GM12878 (cell line): ENCODE measurements at regions of chr17 and their contacts with region 1.

Region 1: DNA sequence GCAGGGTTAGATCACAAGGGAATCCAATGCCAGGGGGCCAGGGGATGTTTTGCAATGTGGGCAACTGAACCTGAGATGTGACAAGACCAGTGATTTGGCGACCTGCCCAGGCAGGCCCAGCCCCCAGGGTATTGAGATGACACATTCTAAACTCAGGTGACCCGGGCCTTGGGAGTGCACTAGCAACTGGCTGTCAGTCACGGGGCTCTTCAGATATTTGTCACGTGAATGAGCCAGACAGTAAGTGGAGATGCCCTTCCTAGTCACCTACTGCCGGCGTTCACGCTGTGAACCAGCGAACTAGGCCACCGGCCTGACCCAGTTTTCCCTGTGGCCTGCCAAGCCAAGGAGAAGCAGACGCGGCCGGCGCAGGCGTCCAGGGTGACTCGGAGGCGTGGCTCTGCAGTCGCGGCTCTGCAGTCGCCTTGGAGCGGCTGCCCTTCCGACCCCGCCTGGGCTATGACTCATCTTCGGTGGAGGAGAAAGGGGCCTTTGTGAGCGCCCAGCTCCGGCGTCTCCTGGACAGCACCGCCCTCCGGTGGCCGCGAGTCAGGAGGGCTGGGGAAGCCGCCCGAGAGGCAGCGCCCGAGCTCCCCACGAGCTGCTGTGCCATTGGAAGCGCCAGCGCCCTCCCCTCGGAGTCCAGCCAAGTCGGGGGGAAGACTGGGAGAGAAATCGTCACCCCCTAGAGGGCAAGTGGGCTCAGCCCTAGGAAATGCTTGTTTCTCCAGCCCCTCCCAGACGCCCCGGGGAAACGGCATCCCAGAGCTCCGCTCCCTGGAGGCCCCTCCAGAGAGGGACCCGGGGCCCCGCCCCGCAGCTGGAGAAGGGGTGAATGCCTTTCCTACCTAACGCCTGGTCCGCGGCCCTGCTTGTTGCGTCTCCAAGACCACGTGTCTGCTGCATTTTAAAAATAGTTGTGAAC is 38.8 kb downstream of the WSB1 start:
- DNase-seq: peak; percentile 81
- ATAC-seq: peak; percentile 94
- H3K4me3 ChIP-seq: peak overlapping the region; percentile 67
- H3K27ac ChIP-seq: peak overlapping the region; percentile 72
- H3K4me1 ChIP-seq: peaks cover 20% of the 10 kb centered on the region
- H3K27me3 ChIP-seq: no peaks in the 10 kb centered on the region
- CTCF ChIP-seq: peak; percentile 64 to 96 (median 83); a peak in 5 of 6 replicates
- EP300 ChIP-seq: peak; percentile 48 to 59; a peak in 3 of 4 replicates
- POLR2A ChIP-seq: no peak
- RAD21 ChIP-seq: peak; percentile 87

Region 2: DNA sequence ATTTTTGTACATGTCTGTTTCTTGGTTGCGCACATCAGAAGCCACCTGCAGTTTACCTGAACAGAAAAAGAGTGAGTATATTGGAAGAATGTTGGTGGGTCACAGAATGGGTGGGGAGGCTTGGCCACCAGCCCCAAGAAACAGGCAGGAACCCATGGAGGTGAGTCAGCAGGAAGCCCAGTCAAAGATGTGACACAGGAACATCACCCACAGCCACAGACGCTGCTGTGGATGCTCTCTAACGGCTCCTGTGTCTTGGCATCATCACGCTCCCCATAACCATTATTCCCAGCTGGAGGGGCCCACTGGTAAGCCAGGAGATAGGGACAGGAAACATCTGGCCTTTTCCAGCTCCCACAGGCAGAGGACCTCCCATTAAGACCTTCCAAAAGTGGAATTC is 132.8 kb before region 1 on chr17:
- CTCF ChIA-PET with region 1: interaction called, 15 read pairs
- POLR2A ChIA-PET with region 1: interaction called, 4 read pairs
- RAD21 ChIA-PET with region 1: interaction called, 12 read pairs
- SMC1A ChIA-PET with region 1: interaction called, 12 read pairs
- in situ Hi-C with region 1: no loop called
- intact Hi-C with region 1: no loop called
- DNase-seq: no peak
- ATAC-seq: no peak
- H3K4me3 ChIP-seq: no peak overlapping the region
- H3K27ac ChIP-seq: no peak overlapping the region
- H3K4me1 ChIP-seq: no peaks in the 10 kb centered on the region
- H3K27me3 ChIP-seq: no peaks in the 10 kb centered on the region
- CTCF ChIP-seq: no peak
- EP300 ChIP-seq: no peak
- POLR2A ChIP-seq: no peak
- RAD21 ChIP-seq: no peak

Region 3: DNA sequence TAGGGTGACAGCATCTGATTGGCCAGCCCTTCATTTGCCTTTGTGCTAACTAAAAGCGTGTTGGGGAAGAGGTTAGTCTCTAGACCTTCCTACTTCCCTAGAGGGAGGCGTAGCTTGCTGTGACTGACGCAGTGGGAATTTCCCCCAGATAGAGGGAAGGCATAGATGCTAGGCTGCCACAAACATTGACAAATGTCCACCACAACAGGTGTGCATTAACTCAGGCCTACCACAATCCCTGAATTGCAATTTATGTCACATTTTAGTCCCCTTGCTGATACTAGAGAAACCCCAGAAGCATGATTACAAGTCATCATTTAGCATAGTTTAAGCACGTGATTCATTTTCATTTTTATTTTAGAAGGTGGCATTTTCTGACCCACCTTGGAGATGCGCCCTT is 115.1 kb before region 1 on chr17:
- CTCF ChIA-PET with region 1: interaction called, 5 read pairs
- POLR2A ChIA-PET with region 1: no interaction called
- RAD21 ChIA-PET with region 1: interaction called, 13 read pairs
- SMC1A ChIA-PET with region 1: interaction called, 15 read pairs
- in situ Hi-C with region 1: no loop called
- intact Hi-C with region 1: loop called (anchors 2 kb)
- DNase-seq: peak; percentile 89
- ATAC-seq: peak; percentile 88
- H3K4me3 ChIP-seq: no peak overlapping the region
- H3K27ac ChIP-seq: peak overlapping the region; percentile 72
- H3K4me1 ChIP-seq: peaks cover 38% of the 10 kb centered on the region
- H3K27me3 ChIP-seq: no peaks in the 10 kb centered on the region
- CTCF ChIP-seq: no peak
- EP300 ChIP-seq: peak; percentile 78 to 79; a peak in 3 of 4 replicates
- POLR2A ChIP-seq: no peak
- RAD21 ChIP-seq: no peak

Region 4: GRCh38 chr17:27293898-27294688 is 38.7 kb before region 1 on chr17 and contains the start of gene WSB1:
- CTCF ChIA-PET with region 1: interaction called, 5 read pairs
- POLR2A ChIA-PET with region 1: interaction called, 8 read pairs
- RAD21 ChIA-PET with region 1: interaction called, 26 read pairs
- SMC1A ChIA-PET with region 1: interaction called, 7 read pairs
- in situ Hi-C with region 1: loop called (anchors 5 kb)
- intact Hi-C with region 1: loop called (anchors 2 kb)
- DNase-seq: peak; percentile 61
- ATAC-seq: peak; percentile 83
- H3K4me3 ChIP-seq: peak within 1 kb of the TSS; percentile 86
- H3K27ac ChIP-seq: peak within 1 kb of the TSS; percentile 97
- H3K4me1 ChIP-seq: peaks cover 11% of the 10 kb centered on the region
- H3K27me3 ChIP-seq: no peaks in the 10 kb centered on the region
- CTCF ChIP-seq: no peak
- EP300 ChIP-seq: peak; percentile 20 to 57; a peak in 2 of 4 replicates
- POLR2A ChIP-seq: peak; percentile 100
- RAD21 ChIP-seq: no peak
- polyA plus RNA-seq, gene WSB1: 26.6 to 49.8 TPM

Region 5: DNA sequence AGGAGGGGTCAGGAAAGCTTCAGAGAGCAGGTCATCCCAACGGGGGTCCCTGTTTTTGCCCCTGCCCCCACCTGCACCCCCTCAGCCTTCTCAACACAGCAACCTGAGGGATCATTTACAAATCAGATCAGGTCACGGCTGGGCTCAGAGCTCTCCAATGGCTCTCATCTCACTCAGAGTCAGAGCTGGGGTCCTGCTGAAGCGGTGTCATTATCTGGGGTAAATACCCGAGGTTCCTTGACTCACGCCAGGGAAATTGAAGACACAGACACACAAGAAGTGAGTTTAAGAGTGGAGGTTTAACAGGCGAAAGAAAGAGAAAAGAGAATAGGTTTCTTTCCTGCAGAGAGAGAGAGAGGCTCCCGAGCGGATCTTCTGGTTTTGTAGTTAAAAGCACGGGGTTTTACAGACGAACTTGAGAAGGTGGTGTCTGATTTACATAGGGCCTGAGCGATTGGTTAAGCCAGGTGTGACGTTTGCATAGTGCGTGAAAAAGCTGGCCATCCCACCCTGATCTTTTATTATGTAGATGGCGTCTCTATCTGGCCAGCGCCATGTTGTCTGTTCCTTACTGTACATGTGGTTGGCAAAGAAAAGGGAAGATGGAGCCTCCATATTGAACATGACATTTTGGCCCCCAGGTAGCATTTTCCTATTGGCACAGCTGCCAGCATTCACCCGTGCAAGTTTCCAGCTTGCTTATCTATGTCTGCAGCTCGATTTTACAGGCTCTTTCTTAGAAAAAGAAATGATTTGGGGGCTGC is 12.6 kb after region 1 on chr17:
- CTCF ChIA-PET with region 1: interaction called, 13 read pairs
- POLR2A ChIA-PET with region 1: no interaction called
- RAD21 ChIA-PET with region 1: interaction called, 9 read pairs
- SMC1A ChIA-PET with region 1: interaction called, 3 read pairs
- in situ Hi-C with region 1: no loop called
- intact Hi-C with region 1: loop called (anchors 2 kb)
- DNase-seq: no peak
- ATAC-seq: no peak
- H3K4me3 ChIP-seq: no peak overlapping the region
- H3K27ac ChIP-seq: no peak overlapping the region
- H3K4me1 ChIP-seq: peaks cover 17% of the 10 kb centered on the region
- H3K27me3 ChIP-seq: no peaks in the 10 kb centered on the region
- CTCF ChIP-seq: no peak
- EP300 ChIP-seq: no peak
- POLR2A ChIP-seq: no peak
- RAD21 ChIP-seq: no peak

Region 6: DNA sequence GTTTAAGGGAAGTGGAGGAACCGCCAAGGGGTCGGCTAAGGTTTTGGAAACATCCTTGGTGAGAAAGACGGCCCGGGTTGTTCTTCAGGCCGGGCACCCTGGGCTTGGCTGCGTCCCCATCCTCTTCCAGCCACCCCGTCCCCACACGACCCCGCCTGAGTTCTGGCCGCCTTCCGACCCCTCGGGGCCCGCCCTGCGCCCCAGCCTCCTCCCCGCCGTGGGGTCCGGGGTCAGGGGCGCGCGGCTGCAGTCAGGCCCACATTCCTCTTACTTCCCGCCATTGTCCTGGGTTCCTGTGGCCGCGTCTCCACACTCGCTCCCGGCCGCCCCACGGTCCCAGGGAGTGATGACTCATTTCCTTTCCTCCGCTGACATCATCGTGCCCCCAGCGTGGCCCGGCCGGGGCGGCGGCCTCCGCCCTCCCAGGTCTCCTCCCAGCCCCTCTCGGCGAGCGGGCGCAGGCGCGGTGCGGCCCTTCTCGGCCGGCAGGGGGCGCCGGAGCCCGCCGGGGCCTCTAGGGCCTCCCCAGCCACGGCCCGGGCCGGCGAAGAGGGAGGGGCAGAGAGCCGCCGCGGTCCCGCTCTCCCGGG is 20.8 kb after region 1 on chr17:
- CTCF ChIA-PET with region 1: interaction called, 13 read pairs
- POLR2A ChIA-PET with region 1: no interaction called
- RAD21 ChIA-PET with region 1: interaction called, 9 read pairs
- SMC1A ChIA-PET with region 1: interaction called, 3 read pairs
- in situ Hi-C with region 1: no loop called
- intact Hi-C with region 1: loop called (anchors 2 kb)
- DNase-seq: peak; percentile 42
- ATAC-seq: peak; percentile 94
- H3K4me3 ChIP-seq: peak overlapping the region; percentile 73
- H3K27ac ChIP-seq: peak overlapping the region; percentile 70
- H3K4me1 ChIP-seq: peaks cover 7% of the 10 kb centered on the region
- H3K27me3 ChIP-seq: no peaks in the 10 kb centered on the region
- CTCF ChIP-seq: peak; percentile 63 to 93 (median 89); a peak in 4 of 6 replicates
- EP300 ChIP-seq: peak in 1 of 2 experiments; percentile 39; a peak in 2 of 4 replicates
- POLR2A ChIP-seq: peak; percentile 85
- RAD21 ChIP-seq: peak; percentile 73

Region 7: GRCh38 chr17:27381007-27381501 is 48.3 kb after region 1 on chr17:
- CTCF ChIA-PET with region 1: no interaction called
- POLR2A ChIA-PET with region 1: interaction called, 10 read pairs
- RAD21 ChIA-PET with region 1: interaction called, 4 read pairs
- SMC1A ChIA-PET with region 1: interaction called, 3 read pairs
- in situ Hi-C with region 1: no loop called
- intact Hi-C with region 1: no loop called
- DNase-seq: peak; percentile 27
- ATAC-seq: peak; percentile 96
- H3K4me3 ChIP-seq: no peak overlapping the region
- H3K27ac ChIP-seq: no peak overlapping the region
- H3K4me1 ChIP-seq: peaks cover 14% of the 10 kb centered on the region
- H3K27me3 ChIP-seq: no peaks in the 10 kb centered on the region
- CTCF ChIP-seq: peak; percentile 100; a peak in 5 of 6 replicates
- EP300 ChIP-seq: no peak
- POLR2A ChIP-seq: no peak
- RAD21 ChIP-seq: peak; percentile 67

Region 8: GRCh38 chr17:27539794-27540317 is 207.1 kb after region 1 on chr17:
- CTCF ChIA-PET with region 1: no interaction called
- POLR2A ChIA-PET with region 1: no interaction called
- RAD21 ChIA-PET with region 1: no interaction called
- SMC1A ChIA-PET with region 1: no interaction called
- in situ Hi-C with region 1: no loop called
- intact Hi-C with region 1: no loop called
- DNase-seq: no peak
- ATAC-seq: no peak
- H3K4me3 ChIP-seq: no peak overlapping the region
- H3K27ac ChIP-seq: no peak overlapping the region
- H3K4me1 ChIP-seq: peaks cover 44% of the 10 kb centered on the region
- H3K27me3 ChIP-seq: no peaks in the 10 kb centered on the region
- CTCF ChIP-seq: no peak
- EP300 ChIP-seq: no peak
- POLR2A ChIP-seq: no peak
- RAD21 ChIP-seq: no peak